ENCODE measurements at regions of chr5 and their contacts with region 1.

Region 1: GRCh38 chr5:180291943-180292831 is at the start of gene MAPK9:
- DNase-seq: peak; percentile 91
- ATAC-seq: peak; percentile 94
- total RNA-seq, gene MAPK9: 42.4 TPM

Region 2: GRCh38 chr5:180470966-180471582 is 178.9 kb after region 1 on chr5:
- intact Hi-C with region 1: loop called (anchors 5 kb)
- DNase-seq: peak; percentile 64
- ATAC-seq: peak; percentile 84